Tibial artery (tissue), 4 donors: ENCODE measurements at regions of chr1 and their contacts with region 1.

Region 1: GRCh38 chr1:44213222-44214112 is at the start of gene DMAP1:
- DNase-seq: peak; percentile 80 to 88
- H3K4me3 ChIP-seq: peak within 1 kb of the TSS; percentile 86 to 92
- H3K27ac ChIP-seq: peak within 1 kb of the TSS; percentile 82 to 84
- H3K4me1 ChIP-seq: peaks cover 0 to 20% (median 17%) of the 10 kb centered on the region in 4 donors
- H3K27me3 ChIP-seq: no peaks in the 10 kb centered on the region
- CTCF ChIP-seq: peak in 1 of 2 experiments; percentile 26

Region 2: DNA sequence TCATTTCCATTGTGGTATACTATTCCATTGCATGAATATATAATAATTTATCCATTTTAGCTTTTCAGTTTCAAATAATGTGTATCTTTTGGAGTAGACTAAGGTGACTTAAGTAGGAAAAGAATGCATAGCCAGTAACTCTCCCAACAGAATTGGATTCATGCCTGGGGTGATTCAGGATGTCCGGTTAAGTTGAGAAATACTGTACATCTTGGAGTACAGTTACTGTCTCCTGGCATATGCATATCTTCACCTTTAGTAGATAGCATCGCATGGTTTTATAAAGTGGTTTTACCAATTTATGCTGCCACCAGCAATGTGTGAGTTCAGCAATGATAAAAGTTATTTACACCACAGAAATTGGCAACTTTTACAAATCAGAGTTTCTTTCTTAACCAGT is 163.6 kb before region 1 on chr1:
- intact Hi-C with region 1: no loop called
- DNase-seq: no peak
- H3K4me3 ChIP-seq: no peak overlapping the region
- H3K27ac ChIP-seq: no peak overlapping the region
- H3K4me1 ChIP-seq: peaks cover 0 to 16% (median 9%) of the 10 kb centered on the region in 4 donors
- H3K27me3 ChIP-seq: no peaks in the 10 kb centered on the region
- CTCF ChIP-seq: no peak

Region 3: GRCh38 chr1:44237721-44238457 is 24.4 kb after region 1 on chr1:
- intact Hi-C with region 1: no loop called
- DNase-seq: peak; percentile 31 to 83
- H3K4me3 ChIP-seq: peak overlapping the region; percentile 21 to 35
- H3K27ac ChIP-seq: peak overlapping the region; percentile 73 to 87
- H3K4me1 ChIP-seq: peaks cover 6 to 55% (median 40%) of the 10 kb centered on the region in 4 donors
- H3K27me3 ChIP-seq: no peaks in the 10 kb centered on the region
- CTCF ChIP-seq: peak; percentile 57 to 67

Region 4: DNA sequence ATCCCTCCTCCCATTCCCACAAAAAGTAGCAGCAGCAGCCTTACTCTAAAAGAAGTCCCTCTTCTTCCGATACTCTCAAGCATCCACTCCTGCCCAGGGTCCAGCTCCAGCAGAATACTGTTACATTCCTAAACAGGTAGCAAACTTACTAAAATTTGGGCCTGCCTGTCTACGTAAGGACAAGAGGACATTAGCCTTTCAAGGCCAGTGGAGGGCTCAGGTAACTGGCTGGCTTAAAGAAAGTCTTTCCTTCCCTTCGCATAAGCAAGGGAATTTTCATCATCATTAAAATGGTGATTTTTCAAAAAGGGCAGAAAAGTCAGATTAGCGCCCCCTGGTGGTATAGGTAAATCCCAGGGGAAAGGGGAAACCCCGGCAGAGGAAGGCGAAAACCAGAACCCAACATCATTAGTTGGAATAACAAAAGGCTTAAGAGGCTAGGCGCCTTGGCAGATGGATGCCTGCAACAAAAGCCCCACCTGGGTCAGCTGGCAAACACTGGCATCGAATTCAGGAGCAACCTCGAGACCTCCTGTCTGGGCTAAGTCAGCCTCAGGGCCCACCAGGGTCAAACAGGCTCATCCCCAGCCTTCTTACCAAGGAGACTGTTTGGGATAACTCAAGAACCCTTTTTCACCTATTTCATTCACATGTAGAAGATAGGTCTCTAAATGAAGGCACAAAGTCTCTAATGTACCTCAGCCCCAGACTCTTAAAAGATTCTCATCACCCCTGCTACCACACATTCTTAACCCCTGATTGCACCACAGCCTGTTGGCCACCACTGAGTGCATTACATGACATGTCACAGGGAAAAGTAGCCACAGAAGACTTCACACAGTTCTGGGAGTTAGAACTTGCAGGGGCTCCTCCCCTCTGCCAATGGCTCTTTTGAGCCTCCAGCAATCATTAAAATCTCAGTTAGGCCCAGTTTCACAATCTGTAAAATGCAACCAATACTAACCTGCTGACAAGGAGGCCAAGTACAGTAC is 104.9 kb after region 1 on chr1:
- intact Hi-C with region 1: loop called (anchors 5 kb)
- DNase-seq: no peak
- H3K4me3 ChIP-seq: no peak overlapping the region
- H3K27ac ChIP-seq: no peak overlapping the region
- H3K4me1 ChIP-seq: peaks cover 0 to 6% (median 0%) of the 10 kb centered on the region in 4 donors
- H3K27me3 ChIP-seq: no peaks in the 10 kb centered on the region
- CTCF ChIP-seq: peak; percentile 50 to 73

Region 5: GRCh38 chr1:44405041-44405797 is 191.8 kb after region 1 on chr1 and contains the start of gene RNF220:
- intact Hi-C with region 1: loop called (anchors 10 kb)
- DNase-seq: peak; percentile 53 to 70
- H3K4me3 ChIP-seq: peak within 1 kb of the TSS; percentile 45 to 53
- H3K27ac ChIP-seq: peak within 1 kb of the TSS in 1 of 2 donors; percentile 5
- H3K4me1 ChIP-seq: peaks cover 0 to 38% (median 33%) of the 10 kb centered on the region in 4 donors
- H3K27me3 ChIP-seq: peaks cover 16 to 92% of the 10 kb centered on the region in 2 donors
- CTCF ChIP-seq: no peak

Region 6: GRCh38 chr1:44594871-44595746 is 381.6 kb after region 1 on chr1:
- intact Hi-C with region 1: loop called (anchors 2 kb)
- DNase-seq: peak; percentile 69 to 81
- H3K4me3 ChIP-seq: no peak overlapping the region
- H3K27ac ChIP-seq: no peak overlapping the region
- H3K4me1 ChIP-seq: no peaks in the 10 kb centered on the region
- H3K27me3 ChIP-seq: peaks cover 0 to 40% of the 10 kb centered on the region in 2 donors
- CTCF ChIP-seq: peak; percentile 90 to 96

Region 7: DNA sequence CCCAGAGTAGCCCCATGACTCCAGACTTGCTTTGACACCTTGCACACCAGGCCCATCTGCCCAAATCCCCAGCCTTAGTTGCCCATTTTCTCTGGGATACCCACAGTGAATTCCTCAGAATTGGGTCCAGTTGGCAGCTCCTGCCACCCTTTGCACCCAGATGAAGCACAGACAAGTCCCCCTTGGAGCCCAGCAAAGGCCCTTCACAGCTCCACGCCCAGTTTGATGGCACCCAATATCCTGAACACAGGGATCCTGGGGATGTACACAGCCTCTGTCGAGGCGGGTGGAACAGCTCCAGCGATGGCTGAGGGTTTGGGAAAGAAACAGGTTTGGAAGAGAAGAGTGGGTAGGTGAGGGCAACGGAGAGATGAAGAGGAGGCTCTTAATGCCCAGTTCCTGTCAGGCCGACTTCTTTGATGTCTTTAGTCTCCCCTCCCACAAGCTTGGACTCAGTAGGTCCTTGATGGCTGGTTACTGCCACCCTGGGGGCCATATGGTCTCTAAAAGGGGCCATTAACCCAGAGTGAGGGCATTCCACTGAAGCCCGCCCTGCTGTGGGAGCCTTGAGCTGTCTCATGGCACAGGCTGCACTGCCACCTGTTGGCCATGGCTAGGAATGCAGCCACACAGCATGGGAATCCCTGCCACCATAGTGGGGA is 439.1 kb after region 1 on chr1:
- intact Hi-C with region 1: loop called (anchors 5 kb)
- DNase-seq: peak; percentile 80 to 83
- H3K4me3 ChIP-seq: no peak overlapping the region
- H3K27ac ChIP-seq: no peak overlapping the region
- H3K4me1 ChIP-seq: no peaks in the 10 kb centered on the region
- H3K27me3 ChIP-seq: no peaks in the 10 kb centered on the region
- CTCF ChIP-seq: peak; percentile 87 to 93